ENCODE measurements at regions of chr15 and their contacts with region 1.

Region 1: DNA sequence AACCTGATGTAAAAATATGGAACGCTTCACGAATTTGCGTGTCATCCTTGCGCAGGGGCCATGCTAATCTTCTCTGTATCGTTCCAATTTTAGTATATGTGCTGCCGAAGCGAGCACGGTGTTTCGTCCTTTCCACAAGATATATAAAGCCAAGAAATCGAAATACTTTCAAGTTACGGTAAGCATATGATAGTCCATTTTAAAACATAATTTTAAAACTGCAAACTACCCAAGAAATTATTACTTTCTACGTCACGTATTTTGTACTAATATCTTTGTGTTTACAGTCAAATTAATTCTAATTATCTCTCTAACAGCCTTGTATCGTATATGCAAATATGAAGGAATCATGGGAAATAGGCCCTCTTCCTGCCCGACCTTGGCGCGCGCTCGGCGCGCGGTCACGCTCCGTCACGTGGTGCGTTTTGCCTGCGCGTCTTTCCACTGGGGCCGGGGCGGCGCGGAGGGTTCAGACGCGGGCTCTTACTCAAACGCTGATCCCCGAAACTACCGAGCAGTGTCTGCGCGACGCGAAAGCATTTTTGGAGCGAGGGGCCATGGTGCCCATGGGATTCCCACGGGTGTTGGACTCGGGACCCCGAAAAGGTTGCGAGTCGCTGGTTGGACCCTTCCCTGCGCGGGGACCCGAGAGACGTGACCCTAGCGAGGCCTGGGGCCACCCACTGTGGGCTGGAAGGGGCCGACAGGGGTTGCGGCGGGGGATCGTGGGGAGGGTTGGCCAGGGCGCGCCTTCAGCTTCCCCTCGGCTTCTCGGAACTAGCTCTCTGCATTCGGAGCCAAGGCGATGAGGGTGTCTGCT is at the start of gene RNU6-1:
- DNase-seq: peak; percentile 92 to 95 (median 93)
- ATAC-seq: peak; percentile 91
- H3K4me3 ChIP-seq: peak within 1 kb of the TSS; percentile 59 to 94
- H3K27ac ChIP-seq: peak within 1 kb of the TSS; percentile 96 to 98 (median 97)
- H3K4me1 ChIP-seq: peaks cover 32% of the 10 kb centered on the region
- H3K27me3 ChIP-seq: peaks cover 0 to 10% of the 10 kb centered on the region in 2 donors
- CTCF ChIP-seq: no peak
- POLR2A ChIP-seq: peak; percentile 64 to 90 (median 89)
- total RNA-seq, gene RNU6-1: not detected

Region 2: DNA sequence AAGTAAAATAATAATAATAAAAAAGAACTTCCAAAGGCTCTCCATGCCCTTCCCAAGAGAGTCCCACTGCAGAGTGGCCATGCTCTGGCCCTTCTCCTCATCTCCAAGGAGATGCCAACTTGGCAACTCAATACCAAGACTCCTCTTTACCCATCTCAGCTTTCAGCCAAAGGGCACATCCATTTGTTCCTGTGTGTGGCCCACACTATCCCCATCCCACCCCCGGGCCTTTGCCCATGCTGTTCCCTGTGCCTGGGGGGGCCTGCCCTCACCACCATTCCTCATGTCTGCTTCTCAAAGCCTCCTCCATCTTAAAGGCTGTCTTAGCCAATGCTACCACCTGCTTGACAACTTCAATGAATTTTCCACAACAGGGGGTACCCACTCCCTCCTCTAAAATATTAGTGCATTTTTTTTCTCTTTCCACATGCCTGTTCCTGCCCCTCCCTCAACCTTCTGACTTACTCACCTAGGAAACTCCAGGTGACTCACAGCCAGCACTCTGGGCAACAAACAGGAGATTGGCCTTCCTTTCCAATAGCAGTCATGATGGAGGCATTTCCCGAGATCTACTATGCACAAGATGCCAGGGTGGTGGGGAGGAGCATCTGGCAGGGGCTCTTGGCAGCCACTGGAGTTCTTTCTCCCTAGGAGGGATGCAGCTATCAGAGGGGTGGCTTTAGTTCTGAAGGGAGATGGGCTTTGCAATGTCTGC is 884.1 kb before region 1 on chr15:
- intact Hi-C with region 1: loop called (anchors 10 kb)
- DNase-seq: no peak
- ATAC-seq: no peak
- H3K4me3 ChIP-seq: no peak overlapping the region
- H3K27ac ChIP-seq: no peak overlapping the region
- H3K4me1 ChIP-seq: no peaks in the 10 kb centered on the region
- H3K27me3 ChIP-seq: no peaks in the 10 kb centered on the region
- CTCF ChIP-seq: no peak
- POLR2A ChIP-seq: no peak

Region 3: DNA sequence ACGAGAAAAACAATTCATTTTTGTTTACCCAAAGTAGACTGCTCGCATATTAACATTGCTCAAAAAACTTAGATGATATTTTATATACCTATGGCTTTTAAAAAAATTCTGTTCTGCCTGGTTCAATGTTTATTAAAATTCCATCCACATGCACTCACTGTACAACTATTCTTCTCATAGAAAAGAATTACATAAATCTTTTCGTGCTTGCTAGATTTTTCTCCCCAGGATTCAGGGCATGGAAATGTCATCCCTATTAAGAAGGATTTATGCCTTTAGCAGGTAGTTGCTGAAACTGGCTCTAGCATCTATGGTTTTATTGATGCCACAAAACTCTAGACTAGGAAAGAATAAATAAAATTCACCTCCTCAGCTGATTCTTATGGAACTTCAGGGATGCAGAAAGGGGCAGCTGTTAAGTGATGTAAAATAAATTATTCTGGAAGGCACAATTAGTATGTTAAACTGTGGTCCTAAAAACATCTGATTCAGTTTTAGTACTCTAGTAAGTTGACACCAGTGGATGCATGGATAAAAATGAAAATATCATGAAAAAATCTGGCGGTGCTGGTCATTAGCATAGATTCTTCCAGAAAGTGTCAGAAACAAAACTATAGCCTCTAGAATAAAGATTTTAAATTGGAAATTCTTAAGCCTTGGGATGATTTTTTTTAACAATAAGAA is 627.3 kb before region 1 on chr15:
- intact Hi-C with region 1: no loop called
- DNase-seq: no peak
- ATAC-seq: no peak
- H3K4me3 ChIP-seq: no peak overlapping the region
- H3K27ac ChIP-seq: no peak overlapping the region
- H3K4me1 ChIP-seq: no peaks in the 10 kb centered on the region
- H3K27me3 ChIP-seq: no peaks in the 10 kb centered on the region
- CTCF ChIP-seq: no peak
- POLR2A ChIP-seq: no peak

Region 4: DNA sequence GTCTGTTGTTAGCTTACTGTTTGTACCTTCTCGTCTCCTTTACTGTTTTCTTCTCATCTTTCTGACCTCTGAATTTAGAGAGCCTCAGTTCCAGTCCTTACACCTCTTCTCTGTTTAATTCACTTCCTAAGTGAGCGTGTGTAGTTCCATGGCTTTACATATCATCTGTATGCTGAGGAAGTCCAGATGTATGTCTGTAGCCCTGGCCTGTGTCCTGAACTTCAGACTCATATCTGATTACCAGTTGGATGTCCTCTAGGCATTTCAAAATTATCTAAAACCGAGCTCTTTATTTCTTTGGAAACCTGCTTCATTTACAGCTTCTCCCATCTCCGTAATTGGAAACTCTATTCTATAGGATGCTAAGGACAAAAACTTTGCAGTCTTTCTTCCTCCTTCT is 221.8 kb before region 1 on chr15:
- intact Hi-C with region 1: no loop called
- DNase-seq: no peak
- ATAC-seq: no peak
- H3K4me3 ChIP-seq: no peak overlapping the region
- H3K27ac ChIP-seq: no peak overlapping the region
- H3K4me1 ChIP-seq: peaks cover 6% of the 10 kb centered on the region
- H3K27me3 ChIP-seq: no peaks in the 10 kb centered on the region
- CTCF ChIP-seq: no peak
- POLR2A ChIP-seq: no peak

Region 5: GRCh38 chr15:67937153-67937761 is 97.1 kb after region 1 on chr15:
- intact Hi-C with region 1: no loop called
- DNase-seq: no peak
- ATAC-seq: no peak
- H3K4me3 ChIP-seq: no peak overlapping the region
- H3K27ac ChIP-seq: no peak overlapping the region
- H3K4me1 ChIP-seq: no peaks in the 10 kb centered on the region
- H3K27me3 ChIP-seq: no peaks in the 10 kb centered on the region
- CTCF ChIP-seq: no peak
- POLR2A ChIP-seq: no peak